ENCODE measurements at regions of chr20 and their contacts with region 1.

Region 1: DNA sequence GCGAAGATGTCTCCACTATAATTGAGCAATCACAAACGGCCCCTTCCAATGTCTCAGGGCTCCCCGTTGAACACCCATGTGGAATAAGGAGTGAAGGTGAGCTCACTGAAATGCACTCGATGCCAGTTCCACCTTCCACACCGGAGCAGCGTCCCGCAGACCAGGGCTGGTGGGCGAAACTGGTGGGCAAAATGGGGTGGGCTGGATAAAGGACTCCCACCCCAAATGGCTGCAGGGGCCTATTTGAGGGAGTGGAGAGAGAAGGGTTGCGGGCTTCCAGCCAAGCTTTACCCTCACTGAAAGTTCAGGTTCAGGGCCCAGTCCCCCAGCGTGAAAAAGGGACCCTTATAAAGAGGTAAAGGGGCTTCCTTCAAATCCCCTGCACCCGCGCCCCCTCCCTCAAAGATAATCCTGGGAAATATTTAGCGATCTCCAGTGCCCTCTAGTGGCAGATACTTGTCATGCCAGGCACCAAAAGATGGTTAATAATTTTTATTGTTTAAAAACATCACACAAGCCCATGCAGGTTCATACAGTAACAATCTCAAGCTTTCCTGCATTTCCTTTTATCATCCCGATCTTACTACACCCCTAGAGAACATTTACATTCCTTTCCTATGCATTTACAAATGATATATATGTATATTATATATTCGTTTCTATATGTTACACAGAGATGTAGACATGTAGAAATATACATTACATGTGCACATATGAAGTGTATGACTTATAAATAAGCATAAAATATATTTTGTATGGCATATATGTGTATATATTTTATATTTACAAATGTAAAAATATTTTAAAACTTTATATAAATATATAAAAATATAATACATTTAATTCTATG is 58.2 kb upstream of the NKX2-2 start:
- DNase-seq: no peak
- H3K4me3 Mint-ChIP-seq: no peak overlapping the region
- H3K27ac Mint-ChIP-seq: no peak overlapping the region
- H3K4me1 Mint-ChIP-seq: peaks cover 14% of the 10 kb centered on the region
- H3K27me3 Mint-ChIP-seq: peaks cover 32% of the 10 kb centered on the region

Region 2: DNA sequence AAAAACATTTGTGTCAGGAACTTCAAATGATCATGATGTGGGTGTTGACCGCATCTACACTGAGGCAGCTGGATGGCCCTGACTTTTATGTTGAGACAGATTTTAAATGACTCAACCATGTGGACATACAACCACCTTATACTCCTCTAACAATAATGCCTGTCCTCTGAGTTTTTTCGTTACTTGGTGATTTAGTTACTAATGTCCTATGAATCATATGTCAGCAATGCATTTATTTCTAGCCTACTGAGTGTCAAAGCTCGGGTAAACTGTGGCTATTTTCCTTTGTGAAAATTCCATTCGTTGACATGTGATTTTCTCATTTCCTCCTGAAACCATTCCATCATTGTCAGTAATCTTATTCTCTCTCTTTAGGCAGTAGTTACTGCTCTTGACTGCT is 135.9 kb before region 1 on chr20:
- intact Hi-C with region 1: no loop called
- DNase-seq: no peak
- H3K4me3 Mint-ChIP-seq: no peak overlapping the region
- H3K27ac Mint-ChIP-seq: no peak overlapping the region
- H3K4me1 Mint-ChIP-seq: no peaks in the 10 kb centered on the region
- H3K27me3 Mint-ChIP-seq: peaks cover 21% of the 10 kb centered on the region

Region 3: DNA sequence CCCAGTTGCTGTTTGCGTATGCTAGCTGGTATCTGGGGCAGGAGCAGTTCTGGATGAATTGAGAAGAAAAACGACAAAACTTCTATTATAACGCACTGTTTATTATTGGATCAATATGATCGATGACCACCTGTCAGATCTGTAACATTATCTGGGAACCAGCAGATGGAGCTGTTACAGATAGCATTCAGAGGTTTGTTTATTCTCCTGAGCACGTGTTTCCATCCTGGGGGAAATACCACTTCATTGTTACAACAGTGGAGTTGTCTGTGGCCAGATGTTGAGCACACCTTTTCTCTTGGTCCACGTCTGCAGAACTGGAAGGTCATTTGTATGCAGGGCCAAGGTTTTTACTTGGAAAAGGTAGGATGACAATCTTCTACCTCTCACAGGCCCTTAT is 42.2 kb before region 1 on chr20:
- intact Hi-C with region 1: loop called (anchors 1 kb)
- DNase-seq: no peak
- H3K4me3 Mint-ChIP-seq: no peak overlapping the region
- H3K27ac Mint-ChIP-seq: no peak overlapping the region
- H3K4me1 Mint-ChIP-seq: peaks cover 6% of the 10 kb centered on the region
- H3K27me3 Mint-ChIP-seq: peaks cover 37% of the 10 kb centered on the region

Region 4: GRCh38 chr20:21548390-21549035 is 23.6 kb before region 1 on chr20:
- intact Hi-C with region 1: loop called (anchors 1 kb)
- DNase-seq: peak; percentile 61
- H3K4me3 Mint-ChIP-seq: peak overlapping the region; percentile 47
- H3K27ac Mint-ChIP-seq: peak overlapping the region; percentile 81
- H3K4me1 Mint-ChIP-seq: peaks cover 38% of the 10 kb centered on the region
- H3K27me3 Mint-ChIP-seq: peaks cover 4% of the 10 kb centered on the region

Region 5: GRCh38 chr20:21559305-21559704 is 12.8 kb before region 1 on chr20:
- intact Hi-C with region 1: loop called (anchors 1 kb)
- DNase-seq: peak; percentile 24
- H3K4me3 Mint-ChIP-seq: peak overlapping the region; percentile 71
- H3K27ac Mint-ChIP-seq: peak overlapping the region; percentile 59
- H3K4me1 Mint-ChIP-seq: peaks cover 44% of the 10 kb centered on the region
- H3K27me3 Mint-ChIP-seq: peaks cover 5% of the 10 kb centered on the region

Region 6: DNA sequence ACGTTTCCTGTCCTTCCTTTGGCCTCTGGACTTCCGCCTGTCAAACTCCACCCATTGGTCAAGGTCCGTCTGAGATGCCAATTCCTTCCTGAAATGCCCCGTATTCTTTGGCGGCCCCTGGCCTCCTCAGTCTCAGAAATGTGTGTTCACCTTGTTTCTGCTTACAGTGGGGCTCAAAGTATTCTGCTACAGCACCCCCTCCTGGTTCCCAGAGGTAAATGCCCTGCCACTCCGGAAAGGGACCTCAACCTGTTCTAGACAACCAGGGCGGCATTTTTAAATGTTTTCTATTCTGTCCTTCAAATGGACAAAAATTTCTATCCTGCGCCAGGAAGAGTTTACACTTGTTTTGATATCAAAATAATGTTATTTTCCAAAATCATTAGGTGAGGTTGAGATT is 121.3 kb after region 1 on chr20:
- intact Hi-C with region 1: no loop called
- DNase-seq: no peak
- H3K4me3 Mint-ChIP-seq: no peak overlapping the region
- H3K27ac Mint-ChIP-seq: no peak overlapping the region
- H3K4me1 Mint-ChIP-seq: no peaks in the 10 kb centered on the region
- H3K27me3 Mint-ChIP-seq: peaks cover 15% of the 10 kb centered on the region

Region 7: GRCh38 chr20:22861229-22861980 is 1289.3 kb after region 1 on chr20:
- intact Hi-C with region 1: no loop called
- DNase-seq: no peak
- H3K4me3 Mint-ChIP-seq: no peak overlapping the region
- H3K27ac Mint-ChIP-seq: no peak overlapping the region
- H3K4me1 Mint-ChIP-seq: no peaks in the 10 kb centered on the region
- H3K27me3 Mint-ChIP-seq: no peaks in the 10 kb centered on the region